HAP-1 (cell line): ENCODE measurements at regions of chr16 and their contacts with region 1.

Region 1: DNA sequence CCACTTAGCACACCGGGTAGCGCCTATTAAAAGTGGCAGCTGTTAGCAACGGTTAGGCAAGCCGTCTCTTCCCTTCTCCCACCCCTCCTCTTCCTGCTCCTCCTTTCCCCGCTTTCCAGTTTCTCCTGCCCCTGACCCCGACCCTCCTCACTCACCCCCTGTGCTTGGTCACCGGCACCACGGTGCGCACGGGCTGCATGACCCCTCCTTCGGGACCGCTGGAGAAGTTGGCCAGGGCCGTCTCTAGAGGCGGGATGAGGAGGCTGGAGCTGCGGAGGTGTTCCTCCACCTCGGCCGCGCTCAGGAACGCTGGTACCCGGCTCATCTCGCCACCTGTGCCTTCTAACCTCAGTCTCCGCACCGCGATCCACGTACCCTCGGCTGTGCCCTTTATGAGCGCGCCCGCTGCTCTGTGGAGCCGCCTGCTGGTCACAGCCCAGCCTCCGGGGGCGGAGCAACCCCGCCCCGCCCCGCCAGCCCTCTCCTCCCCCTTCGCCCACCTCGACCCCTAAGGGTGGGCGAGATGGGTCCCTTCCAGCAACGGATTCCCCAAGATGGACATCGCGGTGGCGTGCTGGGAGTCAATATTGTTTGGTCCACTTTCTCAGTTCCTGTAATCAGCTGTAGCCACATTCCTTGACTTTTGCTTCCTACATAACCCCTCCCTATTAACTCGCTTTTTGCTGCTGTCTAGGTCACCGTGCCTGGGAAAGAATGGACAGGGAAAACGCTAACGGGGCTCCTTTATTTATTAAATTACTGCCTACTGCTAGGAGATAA is at the start of gene CRYM:
- DNase-seq: peak; percentile 55 to 85
- H3K4me3 ChIP-seq: peak within 1 kb of the TSS; percentile 43
- H3K4me1 ChIP-seq: peaks cover 3% of the 10 kb centered on the region; the same call in 1 of the 2 replicates
- H3K27me3 ChIP-seq: no peaks in the 10 kb centered on the region

Region 2: GRCh38 chr16:19737306-19738038 is 1540.6 kb before region 1 on chr16:
- in situ Hi-C with region 1: no loop called
- DNase-seq: no peak
- H3K4me3 ChIP-seq: no peak overlapping the region
- H3K4me1 ChIP-seq: no peaks in the 10 kb centered on the region
- H3K27me3 ChIP-seq: no peaks in the 10 kb centered on the region

Region 3: DNA sequence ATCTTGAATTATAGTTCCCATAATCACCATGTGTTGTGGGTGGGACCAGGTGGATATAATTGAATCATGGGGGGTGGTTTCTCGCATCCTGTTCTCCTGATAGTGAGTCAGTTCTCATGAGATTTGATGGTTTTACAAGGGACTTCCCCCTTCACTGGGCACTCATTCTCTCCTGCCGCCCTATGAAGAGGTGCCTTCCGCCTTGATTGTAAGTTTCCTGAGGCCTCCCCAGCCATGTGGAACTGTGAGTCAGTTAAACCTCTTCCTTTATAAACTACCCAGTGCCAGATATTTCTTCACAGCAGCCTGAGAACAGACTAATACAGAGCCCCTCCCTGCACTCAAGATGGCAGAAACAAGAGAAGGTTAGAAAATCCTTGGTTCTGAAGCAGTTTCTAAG is 93.3 kb before region 1 on chr16:
- in situ Hi-C with region 1: loop called (anchors 5 kb)
- DNase-seq: no peak
- H3K4me3 ChIP-seq: no peak overlapping the region
- H3K4me1 ChIP-seq: no peaks in the 10 kb centered on the region
- H3K27me3 ChIP-seq: no peaks in the 10 kb centered on the region